Activated CD8-positive, alpha-beta T cell treated with anti-CD3 and anti-CD28 coated beads for 36 hours (primary cell): ENCODE measurements at regions of chr7 and their contacts with region 1.

Region 1: GRCh38 chr7:151782598-151783448 is 94.1 kb downstream of the PRKAG2 start:
- DNase-seq: peak; percentile 86
- ATAC-seq: peak; percentile 94
- H3K4me3 Mint-ChIP-seq: peak overlapping the region; percentile 74
- H3K27ac Mint-ChIP-seq: peak overlapping the region; percentile 89
- H3K4me1 Mint-ChIP-seq: peaks cover 11% of the 10 kb centered on the region
- H3K27me3 Mint-ChIP-seq: no peaks in the 10 kb centered on the region
- CTCF ChIP-seq: peak; percentile 99

Region 2: GRCh38 chr7:151759591-151760042 is 23.2 kb before region 1 on chr7:
- CTCF ChIA-PET with region 1: interaction called, 87 read pairs
- POLR2A ChIA-PET with region 1: no interaction called
- intact Hi-C with region 1: no loop called
- DNase-seq: peak; percentile 66
- ATAC-seq: peak; percentile 55
- H3K4me3 Mint-ChIP-seq: no peak overlapping the region
- H3K27ac Mint-ChIP-seq: no peak overlapping the region
- H3K4me1 Mint-ChIP-seq: peaks cover 24% of the 10 kb centered on the region
- H3K27me3 Mint-ChIP-seq: no peaks in the 10 kb centered on the region
- CTCF ChIP-seq: peak; percentile 97

Region 3: GRCh38 chr7:151795168-151795811 is 12.5 kb after region 1 on chr7:
- CTCF ChIA-PET with region 1: interaction called, 52 read pairs
- POLR2A ChIA-PET with region 1: interaction called, 3 read pairs
- intact Hi-C with region 1: no loop called
- DNase-seq: peak; percentile 97
- ATAC-seq: peak; percentile 90
- H3K4me3 Mint-ChIP-seq: no peak overlapping the region
- H3K27ac Mint-ChIP-seq: peak overlapping the region; percentile 73
- H3K4me1 Mint-ChIP-seq: peaks cover 33% of the 10 kb centered on the region
- H3K27me3 Mint-ChIP-seq: no peaks in the 10 kb centered on the region
- CTCF ChIP-seq: no peak

Region 4: DNA sequence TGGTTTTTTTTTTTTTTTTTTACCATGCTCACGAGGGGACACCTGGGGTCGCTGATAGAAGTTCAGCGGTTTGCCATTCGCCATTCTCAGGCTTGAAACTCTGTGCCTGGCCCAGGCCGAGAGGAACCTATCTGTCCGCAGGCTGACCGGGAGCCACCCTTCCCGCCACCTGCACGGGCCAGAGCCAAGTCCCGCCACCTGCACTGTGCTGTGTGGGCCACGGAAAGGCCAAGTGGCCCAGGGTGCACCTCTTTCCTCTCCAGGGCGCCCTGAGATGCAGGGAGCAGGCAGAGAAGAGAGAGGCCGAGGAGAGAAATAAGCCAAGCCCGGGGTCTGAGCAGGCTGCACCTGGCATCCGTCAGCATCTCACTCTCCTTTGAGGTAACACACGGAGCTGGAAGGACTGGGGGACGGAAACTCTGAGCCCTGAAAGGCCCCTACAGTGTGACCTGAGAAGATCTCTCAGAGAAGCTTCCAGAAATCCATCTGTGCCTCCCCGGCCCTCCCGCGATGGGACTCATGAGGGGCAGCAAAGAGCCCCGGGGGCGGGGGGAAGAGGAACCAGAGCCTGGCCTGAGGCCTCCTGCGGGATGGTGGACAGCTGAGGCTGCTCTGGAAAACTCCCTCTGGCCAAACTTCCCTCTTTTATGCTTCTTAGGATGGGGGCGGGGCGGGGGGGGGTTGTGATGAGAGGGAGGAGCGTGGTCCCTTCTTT is 47.5 kb after region 1 on chr7:
- CTCF ChIA-PET with region 1: no interaction called
- POLR2A ChIA-PET with region 1: no interaction called
- intact Hi-C with region 1: no loop called
- DNase-seq: no peak
- ATAC-seq: no peak
- H3K4me3 Mint-ChIP-seq: no peak overlapping the region
- H3K27ac Mint-ChIP-seq: no peak overlapping the region
- H3K4me1 Mint-ChIP-seq: peaks cover 36% of the 10 kb centered on the region
- H3K27me3 Mint-ChIP-seq: no peaks in the 10 kb centered on the region
- CTCF ChIP-seq: no peak

Region 5: GRCh38 chr7:151876899-151877777 is 94.3 kb after region 1 on chr7 and contains the start of gene PRKAG2:
- CTCF ChIA-PET with region 1: interaction called, 15 read pairs
- POLR2A ChIA-PET with region 1: interaction called, 6 read pairs
- intact Hi-C with region 1: no loop called
- DNase-seq: peak; percentile 85
- ATAC-seq: peak; percentile 50
- H3K4me3 Mint-ChIP-seq: peak within 1 kb of the TSS; percentile 93
- H3K27ac Mint-ChIP-seq: peak within 1 kb of the TSS; percentile 89
- H3K4me1 Mint-ChIP-seq: peaks cover 8% of the 10 kb centered on the region
- H3K27me3 Mint-ChIP-seq: no peaks in the 10 kb centered on the region
- CTCF ChIP-seq: no peak
- total RNA-seq, gene PRKAG2: 17.0 to 19.2 TPM

Region 6: GRCh38 chr7:151936207-151936606 is 153.4 kb after region 1 on chr7:
- CTCF ChIA-PET with region 1: interaction called, 10 read pairs
- POLR2A ChIA-PET with region 1: no interaction called
- intact Hi-C with region 1: no loop called
- DNase-seq: no peak
- ATAC-seq: peak; percentile 86
- H3K4me3 Mint-ChIP-seq: peak overlapping the region; percentile 51
- H3K27ac Mint-ChIP-seq: peak overlapping the region; percentile 86
- H3K4me1 Mint-ChIP-seq: peaks cover 22% of the 10 kb centered on the region
- H3K27me3 Mint-ChIP-seq: peaks cover 2% of the 10 kb centered on the region
- CTCF ChIP-seq: no peak